OCI-LY7 (cell line): ENCODE measurements at regions of chr4 and their contacts with region 1.

Region 1: GRCh38 chr4:170853422-170854021 is 763.8 kb upstream of the AADAT start:
- DNase-seq: peak; percentile 45
- H3K4me3 ChIP-seq: no peak overlapping the region
- H3K27ac ChIP-seq: no peak overlapping the region
- H3K4me1 ChIP-seq: no peaks in the 10 kb centered on the region
- CTCF ChIP-seq: peak; percentile 93

Region 2: DNA sequence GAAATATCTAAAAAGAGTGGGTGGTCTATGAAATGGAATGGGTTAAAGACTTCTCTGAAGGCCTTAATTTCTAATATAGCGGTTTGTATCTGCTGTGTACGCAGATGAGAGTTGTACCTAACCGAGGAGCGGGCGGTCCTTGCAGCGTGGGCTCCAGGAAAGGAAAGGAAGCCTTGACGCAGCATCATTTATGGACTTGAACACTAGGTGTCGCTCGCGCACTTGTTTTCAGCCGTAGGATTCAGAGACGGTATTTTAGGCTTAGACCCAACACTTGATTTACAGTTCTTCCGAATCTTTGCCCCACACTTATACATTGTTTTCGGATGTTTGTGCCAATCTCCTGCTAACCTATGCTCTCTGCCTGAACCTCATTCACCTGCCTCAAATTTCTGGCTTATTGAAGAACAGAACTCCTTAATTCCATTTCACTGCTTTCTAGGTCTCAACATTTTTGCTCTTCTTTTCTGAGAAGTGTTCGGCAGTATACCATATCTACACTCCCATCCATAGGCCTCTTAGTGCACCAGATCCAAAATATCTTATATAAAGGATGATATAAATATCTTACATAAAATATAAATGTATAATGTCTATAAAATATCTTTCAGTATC is 714.8 kb before region 1 on chr4:
- CTCF ChIA-PET with region 1: no interaction called
- POLR2A ChIA-PET with region 1: no interaction called
- intact Hi-C with region 1: loop called (anchors 5 kb)
- DNase-seq: peak; percentile 62
- H3K4me3 ChIP-seq: no peak overlapping the region
- H3K27ac ChIP-seq: no peak overlapping the region
- H3K4me1 ChIP-seq: no peaks in the 10 kb centered on the region
- CTCF ChIP-seq: peak; percentile 84

Region 3: GRCh38 chr4:170589597-170590191 is 263.8 kb before region 1 on chr4:
- CTCF ChIA-PET with region 1: no interaction called
- POLR2A ChIA-PET with region 1: no interaction called
- intact Hi-C with region 1: loop called (anchors 5 kb)
- DNase-seq: peak; percentile 30
- H3K4me3 ChIP-seq: no peak overlapping the region
- H3K27ac ChIP-seq: no peak overlapping the region
- H3K4me1 ChIP-seq: no peaks in the 10 kb centered on the region
- CTCF ChIP-seq: peak; percentile 61